ENCODE measurements at regions of chr9 and their contacts with region 1.

Region 1: DNA sequence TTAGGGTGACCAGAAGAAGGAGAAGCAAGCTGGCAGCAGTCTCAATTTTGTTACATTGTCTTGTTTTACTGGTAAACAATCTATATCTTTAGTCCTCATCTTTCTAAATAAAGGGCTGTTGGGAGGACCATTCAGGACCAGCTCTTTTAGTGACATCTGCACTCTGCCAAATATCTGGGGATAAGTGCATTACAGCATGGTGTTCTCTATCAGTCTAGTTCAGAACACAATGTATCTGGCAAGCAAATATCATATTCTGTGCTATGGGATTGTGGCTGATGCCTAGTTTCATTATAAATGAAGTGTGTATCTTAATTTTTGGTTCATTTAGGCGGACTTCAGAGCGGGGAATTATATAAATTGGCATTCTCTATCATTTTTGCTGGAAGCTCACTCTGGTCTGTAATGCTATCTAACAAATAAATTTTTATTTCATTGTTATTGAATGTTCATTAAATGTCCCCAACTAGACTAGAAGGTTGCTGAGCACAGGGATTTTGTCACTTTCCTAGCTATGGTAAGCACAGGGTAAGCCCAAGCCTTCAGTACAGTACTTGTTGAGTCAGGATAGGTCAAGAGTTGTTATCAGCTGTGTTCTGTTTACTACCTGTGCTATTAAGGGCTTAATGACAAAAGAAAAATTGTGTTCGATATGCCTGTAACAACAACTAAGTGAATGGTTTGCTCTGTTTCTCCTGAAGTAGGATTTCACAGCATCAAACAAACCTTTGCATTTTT is 11.9 kb downstream of the WDR31 start:
- DNase-seq: no peak
- H3K4me3 ChIP-seq: no peak overlapping the region
- H3K27ac ChIP-seq: no peak overlapping the region
- H3K4me1 ChIP-seq: no peaks in the 10 kb centered on the region
- H3K27me3 ChIP-seq: no peaks in the 10 kb centered on the region
- CTCF ChIP-seq: no peak
- EP300 ChIP-seq: no peak
- POLR2A ChIP-seq: no peak
- RAD21 ChIP-seq: no peak

Region 2: GRCh38 chr9:113317777-113318176 is 10.4 kb before region 1 on chr9:
- CTCF ChIA-PET with region 1: interaction called, 16 read pairs
- POLR2A ChIA-PET with region 1: interaction called, 3 read pairs
- DNase-seq: no peak
- H3K4me3 ChIP-seq: no peak overlapping the region
- H3K27ac ChIP-seq: no peak overlapping the region
- H3K4me1 ChIP-seq: no peaks in the 10 kb centered on the region
- H3K27me3 ChIP-seq: peaks cover 0 to 2% (median under 1%) of the 10 kb centered on the region in 4 experiments; a peak in 2 of 7 replicates
- CTCF ChIP-seq: peak in 2 of 3 experiments; percentile 1 to 7; a peak in 2 of 4 replicates
- EP300 ChIP-seq: no peak
- POLR2A ChIP-seq: no peak
- RAD21 ChIP-seq: 0 out of 4 replicates have a peak, but pooled peaks of 1 of the 2 experiments have one; percentile 4